MCF 10A (cell line): ENCODE measurements at regions of chr7 and their contacts with region 1.

Region 1: GRCh38 chr7:25093268-25093826 is 31.7 kb downstream of the CYCS start:
- DNase-seq: peak; percentile 85
- H3K4me3 Mint-ChIP-seq: no peak overlapping the region
- H3K27ac Mint-ChIP-seq: no peak overlapping the region
- H3K4me1 Mint-ChIP-seq: peaks cover 7% of the 10 kb centered on the region
- H3K27me3 Mint-ChIP-seq: no peaks in the 10 kb centered on the region
- CTCF ChIP-seq: peak; percentile 82

Region 2: GRCh38 chr7:24722386-24723177 is 370.8 kb before region 1 on chr7:
- CTCF ChIA-PET with region 1: interaction called, 7 read pairs
- POLR2A ChIA-PET with region 1: no interaction called
- intact Hi-C with region 1: loop called (anchors 5 kb)
- DNase-seq: peak; percentile 44
- H3K4me3 Mint-ChIP-seq: no peak overlapping the region
- H3K27ac Mint-ChIP-seq: peak overlapping the region; percentile 10
- H3K4me1 Mint-ChIP-seq: peaks cover 30% of the 10 kb centered on the region
- H3K27me3 Mint-ChIP-seq: no peaks in the 10 kb centered on the region
- CTCF ChIP-seq: no peak

Region 3: DNA sequence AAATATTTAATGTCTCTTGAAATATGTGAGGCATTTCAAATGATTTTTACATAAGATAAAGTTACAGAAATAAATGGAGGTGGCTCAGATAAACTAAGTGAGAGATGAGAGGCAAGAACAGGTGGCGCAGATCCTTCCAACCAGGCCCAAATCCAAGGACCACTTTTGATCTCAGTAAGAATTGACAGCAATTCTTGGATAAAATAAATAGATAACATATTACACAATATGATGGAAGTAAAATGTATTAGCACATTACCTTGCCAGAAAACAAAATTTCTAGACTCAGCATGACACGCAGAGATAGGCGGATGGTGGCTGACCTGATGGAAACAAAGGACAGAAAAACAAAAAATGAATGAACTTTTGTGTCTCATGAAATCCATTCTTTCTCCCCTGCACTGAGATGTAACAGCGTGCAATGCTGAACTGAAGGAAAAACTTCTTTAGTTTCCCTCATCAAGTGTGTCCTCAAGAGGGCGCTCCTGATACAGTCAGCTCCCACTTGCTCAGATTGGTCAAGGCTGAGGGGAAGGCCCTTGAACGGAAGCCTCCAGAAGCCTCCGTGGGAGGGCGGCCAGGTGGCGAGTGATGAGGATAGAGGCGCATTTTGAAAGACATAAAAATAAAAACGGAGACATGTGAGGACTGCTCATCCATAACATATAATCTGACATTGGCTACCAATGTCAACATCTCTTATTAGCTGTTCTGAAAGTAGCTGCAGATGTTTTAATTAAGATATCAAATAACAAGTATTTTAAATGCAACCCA is 273.2 kb before region 1 on chr7:
- CTCF ChIA-PET with region 1: interaction called, 186 read pairs
- POLR2A ChIA-PET with region 1: interaction called, 12 read pairs
- intact Hi-C with region 1: loop called (anchors 1 kb)
- DNase-seq: peak; percentile 93
- H3K4me3 Mint-ChIP-seq: peak overlapping the region; percentile 66
- H3K27ac Mint-ChIP-seq: peak overlapping the region; percentile 99
- H3K4me1 Mint-ChIP-seq: peaks cover 39% of the 10 kb centered on the region
- H3K27me3 Mint-ChIP-seq: no peaks in the 10 kb centered on the region
- CTCF ChIP-seq: peak; percentile 77

Region 4: DNA sequence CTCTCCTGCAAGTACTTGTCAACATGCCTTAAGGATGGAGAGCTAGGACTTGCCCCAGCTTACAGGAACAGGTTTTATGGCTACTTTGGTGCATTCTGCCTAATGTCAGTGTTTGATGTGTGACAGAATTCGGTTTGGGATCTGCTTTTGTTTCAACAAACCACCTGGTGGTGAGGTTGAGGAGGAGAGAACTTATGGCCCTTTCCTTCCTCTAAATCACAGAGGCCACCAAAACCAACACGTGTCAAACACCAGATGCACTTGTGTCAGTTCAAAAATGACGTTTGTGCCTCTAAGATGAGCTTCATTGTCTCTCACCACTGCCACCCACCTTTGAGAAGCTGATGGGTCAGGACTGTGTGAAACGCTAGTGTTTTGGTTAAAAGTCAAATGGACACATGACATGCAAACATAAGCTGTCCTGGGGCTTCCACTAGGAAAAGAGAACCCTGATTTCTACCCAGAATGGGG is 197.3 kb before region 1 on chr7:
- CTCF ChIA-PET with region 1: interaction called, 12 read pairs
- POLR2A ChIA-PET with region 1: no interaction called
- intact Hi-C with region 1: loop called (anchors 1 kb)
- DNase-seq: no peak
- H3K4me3 Mint-ChIP-seq: no peak overlapping the region
- H3K27ac Mint-ChIP-seq: no peak overlapping the region
- H3K4me1 Mint-ChIP-seq: peaks cover 20% of the 10 kb centered on the region
- H3K27me3 Mint-ChIP-seq: no peaks in the 10 kb centered on the region
- CTCF ChIP-seq: no peak

Region 5: DNA sequence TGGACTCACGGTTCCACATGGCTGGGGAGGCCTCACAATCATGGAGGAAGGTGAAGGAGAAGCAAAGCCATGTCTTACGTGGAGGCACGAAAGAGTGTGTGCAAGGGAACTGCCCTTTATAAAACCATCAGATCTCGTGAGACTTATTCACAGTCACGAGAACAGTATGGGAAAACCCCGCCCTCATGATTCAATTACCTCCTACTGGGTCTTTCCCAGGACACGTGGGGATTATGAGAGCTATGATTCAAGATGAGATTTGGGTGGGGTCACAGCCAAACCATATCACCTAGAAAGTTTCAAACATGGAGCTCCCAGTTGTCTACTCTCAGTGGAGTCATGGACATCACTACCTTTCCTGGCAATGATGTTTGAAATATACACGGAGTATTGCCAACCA is 17.9 kb before region 1 on chr7:
- CTCF ChIA-PET with region 1: interaction called, 16 read pairs
- POLR2A ChIA-PET with region 1: interaction called, 3 read pairs
- intact Hi-C with region 1: no loop called
- DNase-seq: no peak
- H3K4me3 Mint-ChIP-seq: no peak overlapping the region
- H3K27ac Mint-ChIP-seq: no peak overlapping the region
- H3K4me1 Mint-ChIP-seq: no peaks in the 10 kb centered on the region
- H3K27me3 Mint-ChIP-seq: no peaks in the 10 kb centered on the region
- CTCF ChIP-seq: no peak

Region 6: DNA sequence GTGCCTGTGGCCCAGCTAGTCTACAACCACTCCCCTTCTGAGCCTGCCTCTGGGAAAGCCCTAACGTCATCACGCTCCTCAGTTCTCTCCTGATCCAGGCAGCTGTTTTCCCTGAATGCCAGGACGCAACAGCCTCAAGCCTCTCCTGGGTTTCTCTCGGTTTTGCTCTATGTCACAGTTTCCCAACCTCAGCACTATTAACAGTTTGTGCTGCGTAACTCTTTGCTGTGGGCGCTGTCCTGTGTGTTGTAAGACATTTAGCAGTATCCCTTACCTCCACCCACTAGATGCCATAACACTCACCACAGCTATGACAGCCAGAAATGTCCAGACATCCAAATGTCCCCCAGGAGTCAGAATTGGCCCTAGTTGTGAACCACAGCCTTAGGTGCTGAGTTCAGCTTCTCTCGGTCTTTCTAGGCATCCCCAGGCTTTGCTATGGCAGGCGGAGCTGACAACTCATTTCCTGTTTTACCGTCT is 361.3 kb after region 1 on chr7:
- CTCF ChIA-PET with region 1: no interaction called
- POLR2A ChIA-PET with region 1: no interaction called
- intact Hi-C with region 1: no loop called
- DNase-seq: peak; percentile 26
- H3K4me3 Mint-ChIP-seq: no peak overlapping the region
- H3K27ac Mint-ChIP-seq: no peak overlapping the region
- H3K4me1 Mint-ChIP-seq: no peaks in the 10 kb centered on the region
- H3K27me3 Mint-ChIP-seq: peaks cover 61% of the 10 kb centered on the region
- CTCF ChIP-seq: no peak